ENCODE measurements at regions of chr6 and their contacts with region 1.

Region 1: DNA sequence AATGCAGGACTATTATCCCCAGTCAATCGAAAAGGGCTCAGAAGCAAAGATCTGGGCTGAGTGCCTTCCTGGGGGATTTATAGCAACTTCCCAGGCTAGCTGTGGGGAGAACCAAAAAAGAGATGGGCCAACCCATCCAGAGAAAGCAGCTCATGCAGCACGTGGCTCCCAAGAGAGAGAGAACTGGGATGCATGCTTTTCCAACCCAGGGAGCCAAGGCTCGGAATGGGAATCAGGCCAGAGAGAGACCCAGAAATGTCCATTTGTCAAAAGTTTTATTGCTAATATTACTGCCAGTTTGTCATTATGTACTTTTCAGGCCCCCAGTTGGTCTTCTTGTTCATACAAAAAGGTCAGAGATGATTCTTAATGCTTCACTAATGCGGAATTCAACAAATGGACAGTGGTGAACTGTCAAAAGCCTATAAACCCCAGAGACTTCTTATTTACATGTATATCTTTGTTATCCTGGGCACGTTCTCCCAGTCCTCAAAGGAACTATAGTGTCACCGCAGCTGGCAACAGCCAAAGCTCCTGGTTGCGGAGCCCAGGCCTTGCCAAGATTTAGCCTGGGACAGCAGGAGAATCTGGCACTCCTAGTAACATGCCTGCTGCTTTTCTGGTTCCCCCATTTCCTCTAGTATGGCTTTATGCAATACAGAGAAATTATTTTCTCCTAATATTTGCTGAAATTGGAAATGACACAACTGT is 139.1 kb upstream of the POU3F2 start:
- DNase-seq: no peak
- ATAC-seq: no peak
- H3K4me3 ChIP-seq: no peak overlapping the region
- H3K27ac ChIP-seq: no peak overlapping the region
- H3K4me1 ChIP-seq: no peaks in the 10 kb centered on the region
- H3K27me3 ChIP-seq: no peaks in the 10 kb centered on the region
- CTCF ChIP-seq: no peak

Region 2: DNA sequence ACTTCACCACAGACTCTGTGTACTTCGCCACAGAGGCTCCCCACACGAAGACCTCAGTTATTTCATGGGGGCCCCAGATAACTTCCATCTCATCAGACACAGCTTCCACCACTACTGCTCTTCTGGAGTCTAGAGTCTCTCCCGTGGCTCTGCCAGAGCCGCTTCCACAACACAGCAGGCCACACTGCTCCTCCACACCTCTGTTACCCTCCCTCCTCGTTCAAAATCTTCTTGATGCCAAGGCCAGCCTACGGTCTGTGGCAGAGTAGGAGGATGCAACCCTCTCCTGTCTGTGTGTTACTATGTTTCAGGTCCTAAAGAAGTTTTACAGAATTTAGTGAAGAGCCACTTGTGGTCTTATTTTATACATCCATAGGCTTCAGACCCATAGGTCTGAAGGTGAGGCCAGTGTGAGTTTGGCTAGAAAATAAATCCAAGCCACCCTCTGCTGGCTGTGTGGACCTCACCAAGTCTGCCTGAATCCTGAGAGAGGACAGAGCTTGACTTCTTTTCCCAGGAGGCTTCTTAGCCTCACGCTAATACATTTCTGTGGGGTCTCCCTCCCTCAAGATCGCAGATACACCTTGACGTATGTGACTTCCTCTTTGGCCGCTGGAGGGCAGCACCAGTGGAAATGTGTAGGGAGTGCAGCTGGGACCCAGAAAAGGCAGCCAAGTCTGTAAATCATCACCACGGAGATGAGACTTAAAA is 456.5 kb after region 1 on chr6:
- CTCF ChIA-PET with region 1: no interaction called
- POLR2A ChIA-PET with region 1: interaction called, 20 read pairs
- in situ Hi-C with region 1: no loop called
- intact Hi-C with region 1: no loop called
- DNase-seq: peak; percentile 13
- ATAC-seq: peak; percentile 87
- H3K4me3 ChIP-seq: no peak overlapping the region
- H3K27ac ChIP-seq: no peak overlapping the region
- H3K4me1 ChIP-seq: no peaks in the 10 kb centered on the region
- H3K27me3 ChIP-seq: peaks cover 4% of the 10 kb centered on the region; the same call in 1 of the 2 replicates
- CTCF ChIP-seq: peak; percentile 86

Measured in Panc1 (cell line).